Activated CD4-positive, alpha-beta memory T cell treated with anti-CD3 and anti-CD28 coated beads for 36 hours (primary cell): ENCODE measurements at regions of chr3 and their contacts with region 1.

Region 1: GRCh38 chr3:141441381-141442364 is 45.2 kb upstream of the RASA2 start:
- DNase-seq: peak; percentile 90
- H3K4me3 Mint-ChIP-seq: no peak overlapping the region
- H3K27ac Mint-ChIP-seq: peak overlapping the region; percentile 94
- H3K4me1 Mint-ChIP-seq: peaks cover 51% of the 10 kb centered on the region
- H3K27me3 Mint-ChIP-seq: no peaks in the 10 kb centered on the region

Region 2: GRCh38 chr3:140898340-140899180 is 543.1 kb before region 1 on chr3:
- CTCF ChIA-PET with region 1: no interaction called
- POLR2A ChIA-PET with region 1: no interaction called
- intact Hi-C with region 1: no loop called
- DNase-seq: no peak
- H3K4me3 Mint-ChIP-seq: no peak overlapping the region
- H3K27ac Mint-ChIP-seq: no peak overlapping the region
- H3K4me1 Mint-ChIP-seq: no peaks in the 10 kb centered on the region
- H3K27me3 Mint-ChIP-seq: peaks cover 10% of the 10 kb centered on the region

Region 3: GRCh38 chr3:141303481-141304223 is 138.0 kb before region 1 on chr3:
- CTCF ChIA-PET with region 1: interaction called, 72 read pairs
- POLR2A ChIA-PET with region 1: interaction called, 4 read pairs
- intact Hi-C with region 1: no loop called
- DNase-seq: peak; percentile 56
- H3K4me3 Mint-ChIP-seq: no peak overlapping the region
- H3K27ac Mint-ChIP-seq: no peak overlapping the region
- H3K4me1 Mint-ChIP-seq: peaks cover 44% of the 10 kb centered on the region
- H3K27me3 Mint-ChIP-seq: no peaks in the 10 kb centered on the region

Region 4: GRCh38 chr3:141360888-141361598 is 80.6 kb before region 1 on chr3:
- CTCF ChIA-PET with region 1: interaction called, 71 read pairs
- POLR2A ChIA-PET with region 1: no interaction called
- intact Hi-C with region 1: loop called (anchors 1 kb)
- DNase-seq: no peak
- H3K4me3 Mint-ChIP-seq: peak overlapping the region; percentile 30
- H3K27ac Mint-ChIP-seq: no peak overlapping the region
- H3K4me1 Mint-ChIP-seq: peaks cover 10% of the 10 kb centered on the region
- H3K27me3 Mint-ChIP-seq: peaks cover 1% of the 10 kb centered on the region

Region 5: GRCh38 chr3:141402476-141403171 is 39.0 kb before region 1 on chr3:
- CTCF ChIA-PET with region 1: interaction called, 13 read pairs
- POLR2A ChIA-PET with region 1: interaction called, 3 read pairs
- intact Hi-C with region 1: loop called (anchors 2 kb)
- DNase-seq: peak; percentile 60
- H3K4me3 Mint-ChIP-seq: peak overlapping the region; percentile 88
- H3K27ac Mint-ChIP-seq: peak overlapping the region; percentile 92
- H3K4me1 Mint-ChIP-seq: peaks cover 67% of the 10 kb centered on the region
- H3K27me3 Mint-ChIP-seq: no peaks in the 10 kb centered on the region

Region 6: DNA sequence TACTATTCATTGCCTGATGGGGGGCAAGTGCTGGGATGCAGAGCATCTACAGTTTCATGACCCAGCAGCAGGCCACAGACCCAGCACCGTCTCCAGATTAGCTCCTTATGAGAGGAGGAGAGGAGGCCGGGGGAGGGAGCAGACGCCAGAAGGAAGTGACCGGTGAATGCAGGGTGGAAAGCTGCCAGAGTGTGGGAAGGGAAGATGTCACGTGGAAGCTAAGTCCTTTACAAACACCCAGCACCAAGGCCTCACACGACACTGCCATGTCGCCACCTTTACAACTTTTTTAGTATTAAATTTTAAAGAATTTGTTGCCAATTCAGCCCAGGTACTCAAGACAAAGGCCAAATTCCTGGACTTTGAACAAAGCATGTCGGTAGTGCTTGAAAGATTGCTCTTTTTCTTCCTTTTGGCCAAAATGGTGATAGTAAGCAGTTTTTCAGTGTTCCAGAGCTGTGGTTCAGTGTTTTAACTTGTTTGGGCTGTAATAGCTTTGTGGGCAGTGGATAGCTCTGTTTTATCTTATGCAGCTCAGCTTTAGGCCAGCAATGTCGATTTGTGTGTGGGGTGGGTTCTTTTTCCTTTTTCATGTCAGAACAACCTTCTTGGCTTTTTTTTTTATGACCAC is 15.2 kb before region 1 on chr3:
- CTCF ChIA-PET with region 1: interaction called, 11 read pairs
- POLR2A ChIA-PET with region 1: no interaction called
- intact Hi-C with region 1: loop called (anchors 1 kb)
- DNase-seq: no peak
- H3K4me3 Mint-ChIP-seq: no peak overlapping the region
- H3K27ac Mint-ChIP-seq: no peak overlapping the region
- H3K4me1 Mint-ChIP-seq: peaks cover 33% of the 10 kb centered on the region
- H3K27me3 Mint-ChIP-seq: no peaks in the 10 kb centered on the region

Region 7: GRCh38 chr3:141487521-141488252 is 46.0 kb after region 1 on chr3:
- CTCF ChIA-PET with region 1: no interaction called
- POLR2A ChIA-PET with region 1: no interaction called
- intact Hi-C with region 1: loop called (anchors 1 kb)
- DNase-seq: peak; percentile 94
- H3K4me3 Mint-ChIP-seq: peak overlapping the region; percentile 84
- H3K27ac Mint-ChIP-seq: peak overlapping the region; percentile 94
- H3K4me1 Mint-ChIP-seq: peaks cover 67% of the 10 kb centered on the region
- H3K27me3 Mint-ChIP-seq: no peaks in the 10 kb centered on the region

Region 8: GRCh38 chr3:141605883-141606282 is 164.2 kb after region 1 on chr3:
- CTCF ChIA-PET with region 1: no interaction called
- POLR2A ChIA-PET with region 1: no interaction called
- intact Hi-C with region 1: no loop called
- DNase-seq: no peak
- H3K4me3 Mint-ChIP-seq: no peak overlapping the region
- H3K27ac Mint-ChIP-seq: no peak overlapping the region
- H3K4me1 Mint-ChIP-seq: peaks cover 6% of the 10 kb centered on the region
- H3K27me3 Mint-ChIP-seq: no peaks in the 10 kb centered on the region